K562 (cell line): ENCODE measurements at regions of chr1 and their contacts with region 1.

Region 1: GRCh38 chr1:231357831-231358354 is 19.8 kb downstream of the SPRTN start:
- DNase-seq: peak; percentile 51 to 70 (median 56)
- ATAC-seq: peak; percentile 87
- H3K4me3 ChIP-seq: no peak overlapping the region
- H3K27ac ChIP-seq: no peak overlapping the region
- H3K4me1 ChIP-seq: peaks cover 0 to 21% of the 10 kb centered on the region in 2 experiments; a peak in 3 of 5 replicates
- H3K27me3 ChIP-seq: no peaks in the 10 kb centered on the region
- CTCF ChIP-seq: peak; percentile 78 to 95 (median 82)
- EP300 ChIP-seq: no peak
- POLR2A ChIP-seq: no peak
- RAD21 ChIP-seq: peak; percentile 97 to 98

Region 2: GRCh38 chr1:231493421-231494185 is 135.7 kb after region 1 on chr1:
- CTCF ChIA-PET with region 1: no interaction called
- POLR2A ChIA-PET with region 1: no interaction called
- in situ Hi-C with region 1: no loop called
- intact Hi-C with region 1: loop called (anchors 5 kb)
- DNase-seq: peak in 2 of 4 experiments; percentile 37 to 68
- ATAC-seq: peak; percentile 83
- H3K4me3 ChIP-seq: no peak overlapping the region
- H3K27ac ChIP-seq: no peak overlapping the region
- H3K4me1 ChIP-seq: 0 out of 5 replicates have a peak, but pooled peaks cover 0 to 2% of the 10 kb centered on the region in 2 experiments
- H3K27me3 ChIP-seq: no peaks in the 10 kb centered on the region
- CTCF ChIP-seq: peak in 2 of 3 experiments; percentile 12 to 39; a peak in 1 of 6 replicates
- EP300 ChIP-seq: no peak
- POLR2A ChIP-seq: no peak
- RAD21 ChIP-seq: peak; percentile 28 to 64

Region 3: DNA sequence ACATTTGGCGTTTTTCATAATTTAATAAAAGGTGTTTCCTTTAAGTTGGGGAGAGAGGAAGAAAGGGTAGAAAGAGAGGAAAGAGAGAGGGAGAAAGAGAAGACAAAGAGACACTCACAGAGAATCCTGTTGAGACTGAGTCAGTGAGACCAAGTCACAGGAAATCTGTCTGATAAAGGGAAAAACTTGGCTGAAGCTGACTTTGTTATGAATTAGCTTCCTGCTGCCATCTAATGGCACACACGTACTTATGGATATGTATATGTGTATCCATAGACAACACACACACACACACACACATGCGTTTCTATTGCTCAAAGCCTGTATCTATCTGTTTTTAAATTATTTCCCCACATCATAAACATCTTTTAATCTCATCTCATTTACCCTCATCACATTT is 226.2 kb after region 1 on chr1:
- CTCF ChIA-PET with region 1: interaction called, 18 read pairs
- POLR2A ChIA-PET with region 1: interaction called, 3 read pairs
- in situ Hi-C with region 1: no loop called
- intact Hi-C with region 1: loop called (anchors 1 kb)
- DNase-seq: peak in 2 of 4 experiments; percentile 46 to 68
- ATAC-seq: peak; percentile 88
- H3K4me3 ChIP-seq: no peak overlapping the region
- H3K27ac ChIP-seq: no peak overlapping the region
- H3K4me1 ChIP-seq: no peaks in the 10 kb centered on the region; a peak in 1 of 5 replicates
- H3K27me3 ChIP-seq: no peaks in the 10 kb centered on the region
- CTCF ChIP-seq: peak in 2 of 3 experiments; percentile 51 to 73; a peak in 4 of 6 replicates
- EP300 ChIP-seq: 0 out of 2 replicates have a peak, but pooled peaks have one; percentile 11
- POLR2A ChIP-seq: no peak
- RAD21 ChIP-seq: peak; percentile 69 to 93

Region 4: GRCh38 chr1:231590453-231591198 is 232.7 kb after region 1 on chr1:
- CTCF ChIA-PET with region 1: interaction called, 14 read pairs
- POLR2A ChIA-PET with region 1: interaction called, 3 read pairs
- in situ Hi-C with region 1: no loop called
- intact Hi-C with region 1: loop called (anchors 1 kb)
- DNase-seq: peak in 2 of 4 experiments; percentile 49 to 70
- ATAC-seq: peak; percentile 95
- H3K4me3 ChIP-seq: no peak overlapping the region
- H3K27ac ChIP-seq: no peak overlapping the region
- H3K4me1 ChIP-seq: no peaks in the 10 kb centered on the region; a peak in 1 of 5 replicates
- H3K27me3 ChIP-seq: no peaks in the 10 kb centered on the region
- CTCF ChIP-seq: peak; percentile 67 to 88 (median 81)
- EP300 ChIP-seq: no peak
- POLR2A ChIP-seq: no peak
- RAD21 ChIP-seq: peak; percentile 68 to 88